Calu3 (cell line): ENCODE measurements at regions of chr9 and their contacts with region 1.

Region 1: DNA sequence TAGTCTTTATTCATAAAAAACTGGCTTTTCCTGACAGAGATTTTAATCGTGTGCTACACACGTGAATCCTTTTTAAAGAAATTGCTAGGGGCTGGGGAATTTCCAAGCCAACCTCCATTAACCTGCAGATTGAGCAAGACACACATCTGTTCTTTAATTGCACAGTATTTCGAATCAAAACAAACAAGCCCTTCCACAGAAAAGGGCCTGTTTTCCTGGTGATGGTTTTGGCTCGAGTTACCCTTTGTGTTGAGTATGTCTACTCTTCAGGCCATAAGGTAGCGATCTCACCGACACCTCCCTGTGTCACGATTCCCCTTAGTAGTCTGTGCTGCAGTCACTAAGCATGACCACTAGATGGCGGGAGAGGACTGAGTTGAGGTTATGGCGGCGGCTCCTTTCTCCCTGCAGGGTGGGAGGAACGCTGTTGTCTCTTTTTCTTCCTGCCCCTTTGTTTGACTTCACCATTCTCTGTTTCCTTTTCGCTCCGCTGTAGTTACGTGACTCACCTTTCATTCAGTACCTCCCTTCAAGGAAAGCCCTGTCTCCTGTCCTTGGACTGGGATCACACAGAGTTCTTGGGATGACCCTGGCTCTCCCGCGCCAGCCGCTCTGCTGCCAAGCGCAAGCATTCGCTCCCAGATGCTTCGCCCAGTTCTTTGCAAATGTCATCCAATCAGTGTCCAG is 137.1 kb upstream of the SLC24A2 start:
- DNase-seq: peak; percentile 78
- H3K4me3 Mint-ChIP-seq: peak overlapping the region; percentile 64
- H3K27ac Mint-ChIP-seq: no peak overlapping the region
- H3K4me1 Mint-ChIP-seq: no peaks in the 10 kb centered on the region
- H3K27me3 Mint-ChIP-seq: peaks cover 35% of the 10 kb centered on the region
- CTCF ChIP-seq: peak; percentile 83

Region 2: DNA sequence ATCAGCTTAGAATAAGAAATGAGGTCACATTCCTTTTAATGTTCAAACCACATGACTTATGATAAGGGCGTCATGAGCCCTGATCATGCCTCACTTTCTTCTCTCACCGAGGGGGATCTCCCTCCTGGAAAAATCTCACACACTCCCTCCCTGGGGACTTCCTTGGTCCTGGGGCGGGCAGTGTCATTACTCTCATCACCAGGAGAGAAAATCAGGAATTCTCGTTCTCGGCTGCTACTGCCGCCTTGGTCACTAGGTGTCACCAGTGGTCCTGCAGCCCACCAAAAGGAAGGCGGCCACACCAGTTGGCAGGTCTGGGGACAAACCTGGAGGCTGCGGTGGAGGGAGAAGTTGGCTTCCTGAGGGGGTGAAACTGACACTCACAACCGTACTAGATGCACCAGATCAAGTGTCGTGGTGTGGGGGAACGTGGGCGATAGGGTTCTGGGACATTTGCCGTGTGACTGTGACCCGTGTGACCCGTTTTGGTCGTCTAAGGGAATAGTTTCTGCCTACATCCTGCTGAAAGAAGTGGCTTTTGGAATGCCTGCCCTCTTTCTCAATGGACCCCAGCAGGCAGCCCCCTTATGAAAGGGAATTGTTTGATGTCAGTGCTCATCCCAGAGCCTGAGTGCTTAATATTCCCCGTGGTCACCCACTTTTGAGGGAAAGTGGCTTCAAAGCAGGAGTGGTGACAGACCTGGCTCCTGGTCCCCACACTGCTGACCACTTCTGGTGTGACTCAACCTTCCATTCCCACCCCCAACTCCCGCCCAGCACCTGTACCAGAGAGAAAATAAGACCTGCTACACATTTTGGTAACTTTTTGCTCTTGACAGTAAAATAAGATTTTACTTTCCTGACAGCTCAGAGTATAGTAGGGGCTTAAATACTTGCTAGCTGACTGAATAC is 454.0 kb before region 1 on chr9:
- CTCF ChIA-PET with region 1: no interaction called
- intact Hi-C with region 1: loop called (anchors 5 kb)
- DNase-seq: peak; percentile 55
- H3K4me3 Mint-ChIP-seq: peak overlapping the region; percentile 44
- H3K27ac Mint-ChIP-seq: no peak overlapping the region
- H3K4me1 Mint-ChIP-seq: no peaks in the 10 kb centered on the region
- H3K27me3 Mint-ChIP-seq: peaks cover 42% of the 10 kb centered on the region
- CTCF ChIP-seq: peak; percentile 61

Region 3: DNA sequence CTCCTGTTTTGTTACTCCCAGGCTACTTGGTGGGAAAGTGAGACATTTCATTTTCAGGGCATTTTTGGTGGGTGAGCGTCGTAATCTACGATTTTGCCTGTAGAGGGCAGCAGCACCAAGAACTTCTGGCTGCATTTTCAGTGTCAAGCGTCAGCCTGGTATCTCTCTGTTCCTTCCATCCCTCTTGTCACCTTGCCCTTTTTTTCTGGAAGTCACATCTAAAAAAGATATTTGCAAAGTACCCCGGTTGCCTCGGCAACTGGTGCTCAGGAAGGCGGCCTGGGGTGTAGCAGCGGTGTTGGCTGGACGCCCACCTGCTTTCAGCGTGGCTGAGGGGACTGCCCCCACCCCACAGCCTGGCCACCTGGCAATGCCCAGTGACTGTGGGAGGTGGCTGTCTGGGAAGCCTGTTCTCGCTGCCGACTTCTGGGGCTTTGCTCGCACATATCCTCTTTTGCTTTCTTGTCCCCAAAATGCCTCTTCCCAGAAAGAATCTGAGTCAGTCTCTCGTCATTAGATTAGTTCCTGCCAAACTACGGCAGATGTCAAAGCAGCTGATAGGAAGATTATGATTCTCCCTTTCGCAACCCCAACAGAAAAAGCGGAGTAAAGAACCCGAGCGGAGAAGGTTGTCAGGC is 432.7 kb before region 1 on chr9:
- CTCF ChIA-PET with region 1: no interaction called
- intact Hi-C with region 1: loop called (anchors 5 kb)
- DNase-seq: peak; percentile 34
- H3K4me3 Mint-ChIP-seq: no peak overlapping the region
- H3K27ac Mint-ChIP-seq: no peak overlapping the region
- H3K4me1 Mint-ChIP-seq: no peaks in the 10 kb centered on the region
- H3K27me3 Mint-ChIP-seq: peaks cover 48% of the 10 kb centered on the region
- CTCF ChIP-seq: peak; percentile 33

Region 4: GRCh38 chr9:19988281-19988680 is 62.3 kb after region 1 on chr9:
- CTCF ChIA-PET with region 1: no interaction called
- intact Hi-C with region 1: no loop called
- DNase-seq: no peak
- H3K4me3 Mint-ChIP-seq: no peak overlapping the region
- H3K27ac Mint-ChIP-seq: no peak overlapping the region
- H3K4me1 Mint-ChIP-seq: no peaks in the 10 kb centered on the region
- H3K27me3 Mint-ChIP-seq: peaks cover 13% of the 10 kb centered on the region
- CTCF ChIP-seq: no peak

Region 5: DNA sequence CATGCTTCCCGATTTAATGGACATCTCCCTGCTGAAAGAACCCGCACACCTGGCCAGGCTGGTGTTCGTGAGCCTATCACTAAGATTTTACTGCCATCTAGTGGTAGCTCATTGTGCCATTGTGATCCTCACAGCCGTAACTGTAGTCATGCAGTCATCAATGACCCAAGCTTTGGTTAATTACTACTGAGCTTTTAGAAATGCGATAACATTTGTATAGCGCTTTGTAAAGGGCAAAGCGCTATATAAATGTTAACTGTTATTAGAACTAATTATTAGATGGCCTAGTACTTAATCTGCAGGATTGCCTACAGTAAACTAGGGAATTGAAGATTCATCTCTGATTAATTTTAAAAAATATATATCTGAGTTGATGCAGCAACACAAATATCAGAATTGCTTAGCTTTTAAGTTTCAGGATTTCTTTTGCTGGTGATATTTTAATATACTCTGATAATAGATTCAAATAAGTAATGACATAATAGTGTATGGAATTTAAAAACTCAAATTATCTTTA is 1015.3 kb after region 1 on chr9:
- CTCF ChIA-PET with region 1: no interaction called
- intact Hi-C with region 1: loop called (anchors 2 kb)
- DNase-seq: peak; percentile 39
- H3K4me3 Mint-ChIP-seq: no peak overlapping the region
- H3K27ac Mint-ChIP-seq: no peak overlapping the region
- H3K4me1 Mint-ChIP-seq: no peaks in the 10 kb centered on the region
- H3K27me3 Mint-ChIP-seq: no peaks in the 10 kb centered on the region
- CTCF ChIP-seq: peak; percentile 47

Region 6: GRCh38 chr9:21096172-21096900 is 1170.4 kb after region 1 on chr9:
- CTCF ChIA-PET with region 1: no interaction called
- intact Hi-C with region 1: loop called (anchors 5 kb)
- DNase-seq: peak; percentile 7
- H3K4me3 Mint-ChIP-seq: peak overlapping the region; percentile 54
- H3K27ac Mint-ChIP-seq: peak overlapping the region; percentile 89
- H3K4me1 Mint-ChIP-seq: peaks cover 26% of the 10 kb centered on the region
- H3K27me3 Mint-ChIP-seq: no peaks in the 10 kb centered on the region
- CTCF ChIP-seq: no peak